GM18951 (cell line): ENCODE measurements at regions of chr1 and their contacts with region 1.

Region 1: GRCh38 chr1:32786856-32787255 is 30.3 kb downstream of the YARS1 start:
- POLR2A ChIP-seq: no peak

Region 2: GRCh38 chr1:31957701-31958674 is 828.9 kb before region 1 on chr1:
- in situ Hi-C with region 1: no loop called
- POLR2A ChIP-seq: no peak

Region 3: GRCh38 chr1:32500387-32501209 is 286.3 kb before region 1 on chr1:
- in situ Hi-C with region 1: loop called (anchors 25 kb)
- POLR2A ChIP-seq: peak; percentile 46